ENCODE measurements at regions of chr12 and their contacts with region 1.

Region 1: GRCh38 chr12:94244165-94245133 is 96.1 kb downstream of the PLXNC1 start:
- DNase-seq: peak; percentile 78 to 91 (median 86)
- H3K4me3 ChIP-seq: peak overlapping the region in 1 of 3 experiments; percentile 47
- H3K4me3 Mint-ChIP-seq: peak overlapping the region in 1 of 2 donors; percentile 31
- H3K27ac ChIP-seq: peak overlapping the region; percentile 39 to 75
- H3K27ac Mint-ChIP-seq: peak overlapping the region; percentile 79 to 93 (median 90)
- H3K4me1 ChIP-seq: peaks cover 55 to 69% of the 10 kb centered on the region in 2 donors
- H3K4me1 Mint-ChIP-seq: peaks cover 76% of the 10 kb centered on the region
- H3K27me3 ChIP-seq: no peaks in the 10 kb centered on the region
- H3K27me3 Mint-ChIP-seq: peaks cover 0 to 8% (median 0%) of the 10 kb centered on the region in 3 donors
- CTCF ChIP-seq: no peak

Region 2: GRCh38 chr12:94222351-94223084 is 21.9 kb before region 1 on chr12:
- intact Hi-C with region 1: no loop called
- DNase-seq: no peak
- H3K4me3 ChIP-seq: no peak overlapping the region
- H3K4me3 Mint-ChIP-seq: no peak overlapping the region
- H3K27ac ChIP-seq: peak overlapping the region in 1 of 2 donors; percentile 15
- H3K27ac Mint-ChIP-seq: peak overlapping the region in 1 of 7 donors; percentile 17
- H3K4me1 ChIP-seq: no peaks in the 10 kb centered on the region
- H3K4me1 Mint-ChIP-seq: no peaks in the 10 kb centered on the region
- H3K27me3 ChIP-seq: no peaks in the 10 kb centered on the region
- H3K27me3 Mint-ChIP-seq: peaks cover 0 to 2% (median 0%) of the 10 kb centered on the region in 3 donors
- CTCF ChIP-seq: no peak

Region 3: DNA sequence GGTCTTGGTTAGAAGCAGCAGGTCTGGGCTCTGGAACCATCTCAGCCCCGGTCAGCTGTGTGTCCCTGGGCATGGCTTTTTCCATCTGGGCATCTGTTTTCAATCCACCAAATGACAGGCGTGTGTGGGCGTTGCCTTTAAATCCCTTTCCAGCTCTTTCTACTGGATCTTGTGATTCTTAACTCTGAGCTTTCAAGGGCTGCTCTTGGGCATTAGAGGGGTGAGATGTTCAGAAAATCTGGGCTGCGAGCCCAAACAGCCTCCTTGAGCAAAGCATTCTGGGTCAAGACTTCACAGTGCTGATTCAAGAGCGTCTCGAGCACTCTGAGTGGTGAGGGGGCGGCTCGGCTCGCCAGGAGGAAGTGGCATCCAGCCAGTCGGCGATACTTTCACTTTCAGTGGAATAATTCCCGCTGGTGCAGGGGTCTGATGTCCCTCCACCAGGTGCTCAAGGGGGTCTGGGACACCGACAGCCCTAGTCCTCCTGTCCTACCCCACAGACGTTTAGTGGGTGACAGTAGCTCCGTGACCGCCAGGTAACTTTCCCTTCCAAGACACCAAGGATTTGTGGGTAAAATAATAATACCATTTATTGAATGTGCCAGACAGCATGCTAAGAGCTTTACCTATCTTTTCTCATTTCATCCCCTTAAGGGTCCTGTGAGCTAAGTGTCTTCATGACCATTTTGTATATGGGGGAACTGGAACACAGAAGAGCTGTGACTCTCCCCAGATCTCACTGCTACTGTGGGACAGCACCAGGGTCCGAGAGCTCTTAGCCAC is 18.0 kb after region 1 on chr12:
- intact Hi-C with region 1: loop called in 1 of 2 experiments (anchors 2 kb)
- DNase-seq: peak; percentile 68 to 75 (median 73)
- H3K4me3 ChIP-seq: peak overlapping the region; percentile 49 to 79 (median 61)
- H3K4me3 Mint-ChIP-seq: peak overlapping the region; percentile 85 to 93
- H3K27ac ChIP-seq: peak overlapping the region; percentile 88 to 92
- H3K27ac Mint-ChIP-seq: peak overlapping the region; percentile 95 to 98 (median 98)
- H3K4me1 ChIP-seq: peaks cover 57 to 61% of the 10 kb centered on the region in 2 donors
- H3K4me1 Mint-ChIP-seq: peaks cover 52% of the 10 kb centered on the region
- H3K27me3 ChIP-seq: no peaks in the 10 kb centered on the region
- H3K27me3 Mint-ChIP-seq: no peaks in the 10 kb centered on the region
- CTCF ChIP-seq: no peak

Region 4: DNA sequence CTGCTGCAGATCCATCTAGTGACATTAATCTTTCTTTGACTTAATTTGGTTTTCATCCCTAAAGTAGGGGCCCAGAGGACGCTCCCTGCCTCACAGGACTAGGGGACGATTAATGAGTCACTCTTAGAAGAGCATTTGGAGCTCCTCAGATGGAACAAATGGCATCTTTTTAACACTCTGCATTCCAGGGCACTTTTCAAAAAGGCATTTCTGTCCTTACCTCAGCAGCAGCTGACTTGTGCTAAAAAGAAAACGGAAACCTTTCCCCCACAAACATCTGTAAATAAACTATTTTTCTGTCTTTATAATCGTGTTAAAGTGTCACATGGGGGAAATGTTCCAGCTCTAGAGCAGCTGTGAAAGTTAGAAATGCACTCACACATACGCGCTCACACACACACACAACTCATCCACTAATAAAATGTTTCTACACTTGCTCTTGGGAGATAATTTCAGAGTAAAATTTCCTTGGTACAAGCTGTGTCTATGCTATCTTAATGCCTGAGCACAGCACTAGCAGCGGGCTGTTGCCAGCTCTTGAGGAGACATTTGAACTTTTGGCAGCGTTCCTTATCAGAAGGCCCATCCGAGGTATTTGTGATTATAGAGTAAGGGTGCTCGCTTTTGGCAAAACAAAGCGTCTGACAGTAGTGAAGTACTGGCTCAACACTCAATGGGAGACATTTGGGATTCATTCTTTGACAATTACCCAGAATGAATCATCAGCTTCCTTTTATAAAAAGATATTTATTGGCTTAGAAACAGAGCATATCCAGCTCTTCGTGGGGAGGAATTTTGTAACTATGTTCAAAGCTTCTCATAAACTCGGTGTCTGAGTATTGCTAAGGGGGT is 45.2 kb after region 1 on chr12:
- intact Hi-C with region 1: no loop called
- DNase-seq: no peak
- H3K4me3 ChIP-seq: no peak overlapping the region
- H3K4me3 Mint-ChIP-seq: no peak overlapping the region
- H3K27ac ChIP-seq: no peak overlapping the region
- H3K27ac Mint-ChIP-seq: no peak overlapping the region
- H3K4me1 ChIP-seq: no peaks in the 10 kb centered on the region
- H3K4me1 Mint-ChIP-seq: no peaks in the 10 kb centered on the region
- H3K27me3 ChIP-seq: no peaks in the 10 kb centered on the region
- H3K27me3 Mint-ChIP-seq: peaks cover 0 to 2% (median 0%) of the 10 kb centered on the region in 3 donors
- CTCF ChIP-seq: no peak

Measured in CD14-positive monocyte (primary cell).